ENCODE measurements at regions of chr7 and their contacts with region 1.

Region 1: GRCh38 chr7:77326696-77327628 is 89.2 kb downstream of the GSAP start:
- DNase-seq: no peak
- H3K4me3 Mint-ChIP-seq: no peak overlapping the region
- H3K27ac Mint-ChIP-seq: no peak overlapping the region
- H3K4me1 Mint-ChIP-seq: peaks cover 54% of the 10 kb centered on the region
- H3K27me3 Mint-ChIP-seq: no peaks in the 10 kb centered on the region

Region 2: GRCh38 chr7:77306231-77307067 is 20.5 kb before region 1 on chr7:
- CTCF ChIA-PET with region 1: no interaction called
- intact Hi-C with region 1: no loop called
- DNase-seq: no peak
- H3K4me3 Mint-ChIP-seq: no peak overlapping the region
- H3K27ac Mint-ChIP-seq: no peak overlapping the region
- H3K4me1 Mint-ChIP-seq: peaks cover 5% of the 10 kb centered on the region
- H3K27me3 Mint-ChIP-seq: no peaks in the 10 kb centered on the region

Region 3: GRCh38 chr7:77383333-77383740 is 56.4 kb after region 1 on chr7:
- CTCF ChIA-PET with region 1: no interaction called
- intact Hi-C with region 1: loop called (anchors 2 kb)
- DNase-seq: no peak
- H3K4me3 Mint-ChIP-seq: no peak overlapping the region
- H3K27ac Mint-ChIP-seq: no peak overlapping the region
- H3K4me1 Mint-ChIP-seq: peaks cover 21% of the 10 kb centered on the region
- H3K27me3 Mint-ChIP-seq: no peaks in the 10 kb centered on the region

Measured in activated naive CD4-positive, alpha-beta T cell treated with anti-CD3 and anti-CD28 coated beads for 36 hours (primary cell).